ENCODE measurements at regions of chr4 and their contacts with region 1.

Region 1: GRCh38 chr4:139956507-139957017 is 197.4 kb downstream of the MAML3 start:
- DNase-seq: no peak
- H3K4me3 ChIP-seq: peak overlapping the region; percentile 34 to 38
- H3K27ac ChIP-seq: peak overlapping the region in 1 of 2 donors; percentile 15
- H3K4me1 ChIP-seq: peaks cover 0 to under 1% of the 10 kb centered on the region in 2 donors
- H3K27me3 ChIP-seq: no peaks in the 10 kb centered on the region
- CTCF ChIP-seq: no peak

Region 2: DNA sequence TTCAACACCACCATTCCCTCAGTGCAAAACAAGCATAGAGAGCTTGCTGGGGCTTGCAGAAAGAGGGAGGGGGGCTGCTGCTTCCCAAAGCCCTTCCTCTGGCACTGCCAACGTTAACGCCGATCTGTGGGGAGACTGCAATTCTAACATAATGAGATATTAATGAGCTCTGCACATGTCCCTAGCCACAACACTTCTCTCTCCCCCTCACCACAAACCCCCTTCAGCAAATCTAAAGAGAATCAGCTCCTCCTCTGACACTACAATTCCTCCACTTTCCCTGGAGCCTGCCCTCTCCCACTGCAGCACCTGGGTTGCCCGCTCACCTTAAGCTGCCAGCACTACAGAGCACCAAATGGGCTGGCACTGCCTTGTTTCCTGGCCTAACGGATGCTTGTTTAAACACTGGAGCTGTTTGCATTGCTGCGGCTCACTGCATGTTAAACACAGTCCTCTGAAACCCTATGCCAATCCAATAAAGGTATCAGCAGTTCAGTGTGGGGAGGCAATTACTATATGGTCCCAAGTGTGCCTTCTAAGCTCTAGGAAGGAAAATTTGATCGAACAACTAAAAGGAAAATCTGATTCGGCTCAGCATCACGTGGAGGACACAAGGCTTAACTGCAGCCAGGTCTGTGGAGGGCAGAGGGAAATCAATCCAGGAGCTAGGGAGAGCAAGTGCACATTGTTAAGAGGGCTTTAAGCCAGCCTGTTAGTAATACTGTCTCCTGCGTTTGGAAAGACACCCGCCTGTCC is 35.0 kb before region 1 on chr4:
- intact Hi-C with region 1: loop called (anchors 1 kb)
- DNase-seq: no peak
- H3K4me3 ChIP-seq: no peak overlapping the region
- H3K27ac ChIP-seq: no peak overlapping the region
- H3K4me1 ChIP-seq: peaks cover 3 to 30% of the 10 kb centered on the region in 2 donors
- H3K27me3 ChIP-seq: no peaks in the 10 kb centered on the region
- CTCF ChIP-seq: no peak

Region 3: GRCh38 chr4:140004549-140004895 is 48.0 kb after region 1 on chr4:
- intact Hi-C with region 1: loop called (anchors 5 kb)
- DNase-seq: peak in 1 of 2 donors; percentile 66
- H3K4me3 ChIP-seq: peak overlapping the region; percentile 42 to 58
- H3K27ac ChIP-seq: no peak overlapping the region
- H3K4me1 ChIP-seq: no peaks in the 10 kb centered on the region
- H3K27me3 ChIP-seq: no peaks in the 10 kb centered on the region
- CTCF ChIP-seq: no peak

Region 4: GRCh38 chr4:140116442-140117104 is 160.0 kb after region 1 on chr4:
- intact Hi-C with region 1: no loop called
- DNase-seq: no peak
- H3K4me3 ChIP-seq: no peak overlapping the region
- H3K27ac ChIP-seq: no peak overlapping the region
- H3K4me1 ChIP-seq: no peaks in the 10 kb centered on the region
- H3K27me3 ChIP-seq: no peaks in the 10 kb centered on the region
- CTCF ChIP-seq: no peak